Ovary (tissue), 10 donors: ENCODE measurements at regions of chr12 and their contacts with region 1.

Region 1: DNA sequence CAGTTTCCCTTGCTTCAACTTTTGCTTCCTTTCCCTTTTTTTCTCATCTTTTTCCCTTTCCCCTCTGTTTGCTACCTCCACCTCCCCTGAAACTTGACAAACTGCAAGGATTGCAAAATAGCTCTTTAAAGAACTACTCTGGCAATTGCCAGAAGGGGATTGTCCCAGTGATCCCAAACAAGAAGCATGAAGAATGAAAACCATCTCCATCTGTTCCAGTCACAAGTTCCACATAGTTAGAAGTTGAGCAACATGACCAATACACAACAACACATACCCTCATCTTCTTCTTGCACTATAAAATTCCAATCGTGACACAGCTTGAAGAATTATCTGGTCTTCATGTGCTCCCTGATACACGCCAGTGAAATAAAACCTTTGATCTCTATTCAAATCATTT is 93.7 kb upstream of the USP15 start:
- DNase-seq: no peak
- H3K4me3 ChIP-seq: no peak overlapping the region
- H3K27ac ChIP-seq: no peak overlapping the region
- H3K4me1 ChIP-seq: no peaks in the 10 kb centered on the region
- H3K27me3 ChIP-seq: no peaks in the 10 kb centered on the region
- CTCF ChIP-seq: no peak
- EP300 ChIP-seq: no peak
- POLR2A ChIP-seq: no peak

Region 2: GRCh38 chr12:62021811-62022210 is 144.7 kb before region 1 on chr12:
- intact Hi-C with region 1: no loop called
- DNase-seq: no peak
- H3K4me3 ChIP-seq: no peak overlapping the region
- H3K27ac ChIP-seq: no peak overlapping the region
- H3K4me1 ChIP-seq: no peaks in the 10 kb centered on the region
- H3K27me3 ChIP-seq: no peaks in the 10 kb centered on the region
- CTCF ChIP-seq: no peak
- EP300 ChIP-seq: no peak
- POLR2A ChIP-seq: no peak

Region 3: GRCh38 chr12:62123721-62124203 is 42.7 kb before region 1 on chr12:
- intact Hi-C with region 1: loop called in 1 of 4 experiments (anchors 2 kb)
- DNase-seq: peak; percentile 22 to 44 (median 33)
- H3K4me3 ChIP-seq: no peak overlapping the region
- H3K27ac ChIP-seq: no peak overlapping the region
- H3K4me1 ChIP-seq: no peaks in the 10 kb centered on the region
- H3K27me3 ChIP-seq: no peaks in the 10 kb centered on the region
- CTCF ChIP-seq: peak in 2 of 3 donors; percentile 35
- EP300 ChIP-seq: no peak
- POLR2A ChIP-seq: no peak